Lower leg skin (tissue), 4 donors: ENCODE measurements at regions of chr6 and their contacts with region 1.

Region 1: GRCh38 chr6:163850874-163851273 is 436.4 kb downstream of the QKI start:
- DNase-seq: no peak
- H3K4me3 ChIP-seq: no peak overlapping the region
- CTCF ChIP-seq: no peak
- POLR2A ChIP-seq: no peak

Region 2: GRCh38 chr6:162187168-162187935 is 1663.5 kb before region 1 on chr6:
- intact Hi-C with region 1: loop called (anchors 5 kb)
- DNase-seq: no peak
- H3K4me3 ChIP-seq: no peak overlapping the region
- CTCF ChIP-seq: no peak
- POLR2A ChIP-seq: no peak

Region 3: GRCh38 chr6:162684961-162685360 is 1165.9 kb before region 1 on chr6:
- intact Hi-C with region 1: no loop called
- DNase-seq: no peak
- H3K4me3 ChIP-seq: no peak overlapping the region
- CTCF ChIP-seq: no peak
- POLR2A ChIP-seq: no peak

Region 4: DNA sequence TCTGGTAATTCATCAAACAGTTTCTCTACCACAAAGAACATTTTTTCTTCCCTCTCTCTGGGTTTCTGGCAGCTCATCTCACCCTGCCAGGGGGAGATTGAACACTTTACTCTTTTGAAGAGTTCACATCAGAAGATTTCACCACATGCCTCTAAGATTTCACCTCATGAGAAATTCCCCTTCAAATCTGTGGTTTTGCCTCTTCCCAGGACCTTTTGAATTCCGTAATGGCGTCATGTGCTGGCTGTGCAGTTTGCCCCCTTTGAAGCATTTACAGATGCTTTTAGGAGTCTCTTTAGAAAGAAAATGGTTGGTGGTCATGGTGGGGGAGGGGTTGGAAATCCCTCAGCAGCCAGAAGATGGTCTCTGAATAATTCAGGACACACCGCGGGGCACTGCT is 49.7 kb after region 1 on chr6:
- intact Hi-C with region 1: no loop called
- DNase-seq: no peak
- H3K4me3 ChIP-seq: no peak overlapping the region
- CTCF ChIP-seq: no peak
- POLR2A ChIP-seq: no peak

Region 5: GRCh38 chr6:165717732-165718465 is 1867.0 kb after region 1 on chr6:
- intact Hi-C with region 1: no loop called
- DNase-seq: no peak
- H3K4me3 ChIP-seq: no peak overlapping the region
- CTCF ChIP-seq: no peak
- POLR2A ChIP-seq: no peak